ENCODE measurements at regions of chr5 and their contacts with region 1.

Region 1: GRCh38 chr5:139760066-139761056 is 35.2 kb upstream of the PSD2 start:
- DNase-seq: no peak

Region 2: DNA sequence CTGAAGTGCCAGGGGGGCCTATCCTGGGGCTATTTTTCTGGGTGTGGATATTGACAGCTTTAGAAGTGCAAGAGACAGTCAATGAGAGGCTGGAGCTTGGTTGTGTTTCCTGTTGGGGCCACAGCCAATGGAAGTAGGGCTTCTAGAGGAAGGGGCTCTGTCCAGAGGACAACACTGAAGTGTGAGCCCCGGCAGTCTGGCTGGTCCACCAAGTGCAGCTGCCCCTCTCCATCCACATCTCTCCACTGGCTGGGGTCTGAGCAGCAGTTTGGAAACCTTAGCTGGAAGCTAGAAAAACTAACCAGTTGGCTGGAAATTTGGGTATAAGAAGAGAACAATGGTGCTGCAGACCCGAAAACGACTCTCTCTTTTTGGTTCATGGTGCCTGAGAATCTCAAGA is 29.1 kb before region 1 on chr5:
- intact Hi-C with region 1: loop called in 1 of 2 experiments (anchors 2 kb)
- DNase-seq: no peak

Region 3: GRCh38 chr5:139774980-139775661 is 14.8 kb after region 1 on chr5:
- intact Hi-C with region 1: no loop called
- DNase-seq: peak; percentile 95

Region 4: GRCh38 chr5:139808493-139809139 is 48.3 kb after region 1 on chr5:
- intact Hi-C with region 1: no loop called
- DNase-seq: peak; percentile 76

Region 5: DNA sequence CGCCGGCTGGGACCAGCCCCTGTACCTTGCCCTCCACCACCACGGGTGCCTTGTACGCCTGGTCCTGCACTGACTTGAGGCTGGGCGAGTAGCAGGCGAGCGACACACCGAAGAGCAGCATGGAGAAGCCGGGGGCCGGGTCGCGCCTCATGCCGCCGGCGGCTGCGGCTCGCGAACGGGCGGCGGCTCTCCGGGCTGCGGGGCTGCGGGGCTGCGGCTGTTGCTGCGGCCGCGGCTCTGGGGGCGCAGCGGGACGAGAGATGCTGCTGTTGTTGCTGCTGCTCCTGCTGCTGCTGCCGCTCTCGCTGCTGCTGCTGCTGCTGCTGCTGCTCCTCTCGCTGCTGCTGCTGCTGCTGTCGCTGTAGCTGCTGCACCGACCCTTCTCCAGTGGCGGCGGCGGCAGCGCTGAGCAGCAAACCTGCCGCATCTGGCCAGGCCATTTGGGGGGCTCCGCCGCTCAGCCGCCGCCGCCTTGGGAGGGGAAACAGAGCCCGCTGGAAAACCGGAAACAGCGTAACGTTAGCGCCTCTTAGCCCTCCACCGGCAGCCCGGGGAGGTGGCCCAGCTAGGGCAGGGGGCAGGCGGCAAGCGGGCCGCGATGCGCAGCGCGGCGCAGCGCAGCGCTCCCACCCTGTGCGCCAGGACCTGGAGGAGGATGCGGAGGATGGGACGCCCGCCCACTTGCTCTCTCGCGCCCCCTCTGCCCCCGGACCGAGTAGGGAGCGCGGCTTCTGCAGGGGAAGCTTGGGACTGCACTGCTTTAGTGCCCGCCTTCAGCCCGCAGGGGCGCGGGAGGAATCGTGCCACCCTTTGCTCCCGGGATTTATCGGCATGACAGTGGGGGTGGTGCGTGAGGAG is 282.5 kb after region 1 on chr5 and contains the start of gene NRG2:
- intact Hi-C with region 1: no loop called
- DNase-seq: peak; percentile 83
- total RNA-seq, gene NRG2: 0.51 to 0.90 TPM